WTC11 (cell line): ENCODE measurements at regions of chr5 and their contacts with region 1.

Region 1: GRCh38 chr5:97142521-97143254 is at the start of gene LIX1:
- DNase-seq: peak; percentile 59
- ATAC-seq: peak; percentile 92
- H3K4me3 Mint-ChIP-seq: no peak within 1 kb of the TSS
- H3K27ac Mint-ChIP-seq: peak within 1 kb of the TSS; percentile 43; the same call in 1 of the 2 replicates
- H3K4me1 Mint-ChIP-seq: peaks cover 28% of the 10 kb centered on the region
- H3K27me3 Mint-ChIP-seq: no peaks in the 10 kb centered on the region
- CTCF ChIP-seq: no peak
- total RNA-seq, gene LIX1: not detected in 3 replicates

Region 2: GRCh38 chr5:97044052-97044451 is 98.6 kb before region 1 on chr5:
- CTCF ChIA-PET with region 1: interaction called, 77 read pairs
- POLR2A ChIA-PET with region 1: interaction called, 4 read pairs
- DNase-seq: peak; percentile 76
- ATAC-seq: peak; percentile 97
- H3K4me3 Mint-ChIP-seq: no peak overlapping the region
- H3K27ac Mint-ChIP-seq: no peak overlapping the region; the same call in 1 of the 2 replicates
- H3K4me1 Mint-ChIP-seq: peaks cover 33% of the 10 kb centered on the region
- H3K27me3 Mint-ChIP-seq: no peaks in the 10 kb centered on the region
- CTCF ChIP-seq: peak; percentile 30; the same call in 1 of the 2 replicates

Region 3: GRCh38 chr5:97118261-97119006 is 24.3 kb before region 1 on chr5:
- CTCF ChIA-PET with region 1: no interaction called
- POLR2A ChIA-PET with region 1: interaction called, 16 read pairs
- DNase-seq: no peak
- ATAC-seq: no peak
- H3K4me3 Mint-ChIP-seq: no peak overlapping the region
- H3K27ac Mint-ChIP-seq: peak overlapping the region; percentile 34; the same call in 1 of the 2 replicates
- H3K4me1 Mint-ChIP-seq: peaks cover 17% of the 10 kb centered on the region
- H3K27me3 Mint-ChIP-seq: no peaks in the 10 kb centered on the region
- CTCF ChIP-seq: no peak

Region 4: GRCh38 chr5:97297063-97297703 is 154.5 kb after region 1 on chr5:
- CTCF ChIA-PET with region 1: no interaction called
- POLR2A ChIA-PET with region 1: no interaction called
- DNase-seq: peak; percentile 69
- ATAC-seq: peak; percentile 100
- H3K4me3 Mint-ChIP-seq: no peak overlapping the region
- H3K27ac Mint-ChIP-seq: no peak overlapping the region
- H3K4me1 Mint-ChIP-seq: no peaks in the 10 kb centered on the region
- H3K27me3 Mint-ChIP-seq: no peaks in the 10 kb centered on the region
- CTCF ChIP-seq: peak; percentile 48; the same call in 1 of the 2 replicates